ENCODE measurements at regions of chr13 and their contacts with region 1.

Region 1: DNA sequence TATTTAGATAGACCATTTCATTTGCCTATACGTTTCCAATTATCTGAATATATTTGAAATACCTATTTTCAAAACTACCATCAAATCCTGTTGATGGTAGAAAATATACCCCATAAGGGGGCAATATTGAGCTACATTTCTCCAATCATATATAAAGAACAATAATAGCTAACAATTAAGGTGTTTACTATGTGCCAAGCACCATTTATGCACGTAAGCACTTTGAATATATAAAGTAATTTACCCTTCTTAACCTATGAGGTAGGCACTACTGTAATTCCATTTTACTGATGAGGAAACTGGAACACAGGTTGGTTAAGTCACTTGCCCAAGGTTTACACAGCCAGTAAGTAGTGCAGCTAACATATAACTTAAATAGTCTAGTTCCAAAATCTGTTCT is 79.2 kb downstream of the UBL3 start:
- DNase-seq: no peak
- H3K4me3 ChIP-seq: no peak overlapping the region
- H3K27ac ChIP-seq: peak overlapping the region in 6 of 59 donors; percentile 1 to 33 (median 6)
- H3K27me3 ChIP-seq: no peaks in the 10 kb centered on the region
- CTCF ChIP-seq: peak; percentile 31 to 77 (median 61)

Region 2: GRCh38 chr13:29923554-29924481 is 152.6 kb after region 1 on chr13:
- intact Hi-C with region 1: loop called in 1 of 2 experiments (anchors 5 kb)
- DNase-seq: no peak
- H3K4me3 ChIP-seq: no peak overlapping the region
- H3K27ac ChIP-seq: peak overlapping the region in 7 of 59 donors; percentile 3 to 33 (median 21)
- H3K27me3 ChIP-seq: no peaks in the 10 kb centered on the region
- CTCF ChIP-seq: peak in 55 of 56 donors; percentile 34 to 73 (median 59)

Region 3: DNA sequence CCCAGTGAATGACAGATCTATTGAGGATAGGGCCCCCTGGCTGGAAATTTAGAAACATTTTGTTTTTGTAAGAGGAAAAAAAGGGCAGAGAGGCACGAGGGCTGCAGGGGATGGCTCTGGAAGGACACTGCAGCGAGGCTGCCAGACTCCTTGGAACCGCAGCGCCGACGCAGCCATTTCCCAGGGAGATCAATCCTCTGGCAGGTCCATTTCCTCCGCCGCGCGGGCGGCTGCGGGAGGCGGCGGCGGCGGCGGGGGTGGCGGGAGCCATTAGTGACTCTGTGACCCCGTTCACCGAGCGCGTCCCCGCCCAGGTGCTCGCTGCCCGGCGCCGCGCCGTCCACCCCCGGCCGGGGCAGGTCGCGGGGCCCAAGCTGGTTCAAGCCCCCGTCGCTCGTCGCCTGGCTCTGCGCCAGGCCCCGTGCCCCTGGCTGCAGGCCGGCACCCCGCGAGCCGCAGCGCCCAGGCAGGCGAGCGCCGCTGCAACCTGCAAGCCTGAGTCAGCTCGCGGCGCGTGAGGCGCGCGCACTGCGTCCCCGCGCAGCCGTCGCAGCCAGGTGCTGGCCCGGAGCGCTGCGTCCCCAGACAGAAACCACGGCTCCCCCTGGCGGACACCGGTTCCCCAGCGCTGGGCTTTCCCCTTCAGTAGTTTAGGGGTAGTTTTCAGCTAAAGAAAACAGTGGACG is 343.5 kb after region 1 on chr13:
- intact Hi-C with region 1: loop called (anchors 2 kb)
- DNase-seq: peak; percentile 85 to 92 (median 90)
- H3K4me3 ChIP-seq: peak overlapping the region; percentile 19 to 84 (median 64)
- H3K27ac ChIP-seq: peak overlapping the region in 57 of 59 donors; percentile 30 to 95 (median 79)
- H3K27me3 ChIP-seq: no peaks in the 10 kb centered on the region
- CTCF ChIP-seq: peak; percentile 66 to 98 (median 92)